Panc1 (cell line): ENCODE measurements at regions of chr7 and their contacts with region 1.

Region 1: DNA sequence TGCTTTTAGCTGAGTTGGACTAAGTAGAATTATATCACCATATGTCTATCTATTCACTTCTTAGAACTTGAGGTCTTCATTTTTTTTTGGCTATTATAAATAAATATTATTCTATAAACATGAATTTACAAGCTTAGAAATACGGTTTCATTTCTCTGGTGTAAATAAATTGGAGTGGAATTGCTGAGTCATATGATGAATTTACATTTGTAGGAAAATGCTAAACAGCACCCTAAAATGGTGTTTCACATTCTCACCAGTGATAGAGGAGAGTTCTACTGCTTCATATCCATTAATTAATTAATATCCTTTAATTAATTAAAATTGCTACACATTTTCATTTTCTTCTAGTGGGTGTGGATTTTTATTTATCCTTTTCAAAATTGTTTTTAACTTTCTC is 318.3 kb downstream of the MDFIC start:
- DNase-seq: no peak
- ATAC-seq: no peak
- H3K4me3 ChIP-seq: no peak overlapping the region
- H3K27ac ChIP-seq: no peak overlapping the region
- H3K4me1 ChIP-seq: no peaks in the 10 kb centered on the region
- H3K27me3 ChIP-seq: no peaks in the 10 kb centered on the region
- CTCF ChIP-seq: no peak

Region 2: DNA sequence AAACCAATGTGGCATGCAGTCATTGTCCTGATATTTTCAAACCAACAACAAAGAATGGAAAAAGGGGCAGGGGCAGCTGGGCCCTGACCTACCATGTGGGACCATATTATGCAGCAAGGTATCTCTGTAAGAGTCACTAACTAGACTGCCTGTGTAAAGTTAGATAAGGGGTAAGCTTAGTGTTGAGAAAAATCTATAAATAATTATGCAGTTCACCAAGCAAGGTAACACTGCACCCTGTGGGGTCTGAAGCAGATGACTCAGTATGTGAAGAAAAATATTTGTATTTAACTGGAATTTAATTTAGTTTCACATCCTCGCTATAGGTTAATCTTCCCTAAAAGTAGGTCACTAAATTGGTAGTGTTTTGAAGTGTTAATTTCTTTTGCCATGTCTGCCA is 1420.8 kb before region 1 on chr7:
- CTCF ChIA-PET with region 1: no interaction called
- POLR2A ChIA-PET with region 1: interaction called, 20 read pairs
- in situ Hi-C with region 1: no loop called
- intact Hi-C with region 1: no loop called
- DNase-seq: no peak
- ATAC-seq: no peak
- H3K4me3 ChIP-seq: no peak overlapping the region
- H3K27ac ChIP-seq: no peak overlapping the region
- H3K4me1 ChIP-seq: no peaks in the 10 kb centered on the region
- H3K27me3 ChIP-seq: no peaks in the 10 kb centered on the region
- CTCF ChIP-seq: no peak

Region 3: DNA sequence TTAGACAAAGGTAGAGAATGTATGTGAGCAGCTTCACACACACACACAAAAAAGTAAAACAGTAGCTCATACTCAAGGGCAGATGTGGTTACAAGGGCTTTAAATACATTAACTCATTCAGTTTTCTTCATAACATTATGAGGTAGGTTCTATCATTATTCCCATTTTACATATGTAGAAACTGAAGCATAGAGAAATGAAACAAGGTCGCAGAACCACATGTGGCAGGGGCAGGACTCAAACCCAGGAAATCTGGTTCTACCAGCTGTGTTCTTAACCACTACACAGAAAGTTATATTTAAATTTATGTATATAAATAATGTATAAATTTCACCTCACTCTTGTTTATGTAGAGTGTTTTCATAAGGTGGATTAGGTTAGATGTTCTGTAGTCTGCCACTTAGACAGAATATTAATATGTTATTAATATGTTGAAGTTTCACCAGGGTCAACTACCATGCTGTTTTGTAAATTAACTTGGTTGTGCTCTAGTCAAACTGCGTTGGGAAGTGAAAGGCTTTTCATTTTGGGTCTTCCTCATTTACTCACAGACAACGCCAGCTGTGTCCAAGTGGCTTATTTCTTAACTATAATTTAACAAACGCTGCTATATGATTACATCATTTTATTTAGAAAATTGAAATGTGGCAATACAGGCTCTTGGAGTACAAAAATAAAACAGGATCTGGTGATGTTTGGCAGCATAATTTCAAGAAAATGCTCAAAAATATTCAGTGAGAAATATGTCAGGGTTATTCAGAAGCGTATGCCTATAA is 180.0 kb before region 1 on chr7:
- CTCF ChIA-PET with region 1: no interaction called
- POLR2A ChIA-PET with region 1: no interaction called
- in situ Hi-C with region 1: no loop called
- intact Hi-C with region 1: no loop called
- DNase-seq: no peak
- ATAC-seq: no peak
- H3K4me3 ChIP-seq: no peak overlapping the region
- H3K27ac ChIP-seq: no peak overlapping the region
- H3K4me1 ChIP-seq: no peaks in the 10 kb centered on the region
- H3K27me3 ChIP-seq: no peaks in the 10 kb centered on the region
- CTCF ChIP-seq: no peak